ENCODE measurements at regions of chr2 and their contacts with region 1.

Region 1: DNA sequence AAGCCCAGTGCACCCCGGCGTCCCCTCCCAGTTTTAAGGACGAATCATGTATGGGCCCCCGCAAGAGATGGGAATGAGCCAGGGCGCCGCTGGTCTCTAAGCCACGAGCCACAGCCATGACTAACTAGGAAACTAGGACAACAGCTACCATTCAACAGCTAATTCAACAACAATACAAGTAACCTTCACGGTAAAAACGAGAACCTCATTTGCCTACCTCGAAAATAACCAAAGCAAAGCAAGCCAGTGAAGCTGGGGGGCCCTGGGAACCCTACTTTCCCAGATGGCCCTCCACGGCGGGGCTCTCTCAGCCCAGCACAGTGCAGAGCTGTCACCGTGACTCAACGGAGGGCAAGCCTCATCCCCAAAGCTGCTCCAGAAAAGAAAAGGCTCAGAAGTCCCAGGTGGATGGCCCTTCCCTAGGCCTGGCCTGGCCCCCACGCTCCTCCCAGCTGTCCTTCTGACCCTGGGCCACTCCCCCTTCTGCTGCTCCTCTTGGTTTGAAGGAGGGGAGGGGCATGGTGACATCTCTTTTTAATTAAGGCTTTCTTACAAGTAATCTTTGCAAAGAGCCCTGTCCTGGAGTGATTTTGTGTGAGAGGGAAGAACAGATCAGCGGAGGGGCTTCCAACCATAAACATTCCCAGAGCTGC is 126.3 kb downstream of the HDAC4 start:
- DNase-seq: peak in 2 of 5 donors; percentile 49 to 71
- ATAC-seq: peak; percentile 24 to 58 (median 52)
- H3K4me3 ChIP-seq: peak overlapping the region in 8 of 12 donors; percentile 1 to 46 (median 14)
- H3K27ac ChIP-seq: peak overlapping the region in 10 of 12 donors; percentile 24 to 91 (median 78)
- H3K4me1 ChIP-seq: peaks cover 3 to 67% (median 45%) of the 10 kb centered on the region in 12 donors
- H3K27me3 ChIP-seq: no peaks in the 10 kb centered on the region
- CTCF ChIP-seq: no peak
- POLR2A ChIP-seq: no peak

Region 2: DNA sequence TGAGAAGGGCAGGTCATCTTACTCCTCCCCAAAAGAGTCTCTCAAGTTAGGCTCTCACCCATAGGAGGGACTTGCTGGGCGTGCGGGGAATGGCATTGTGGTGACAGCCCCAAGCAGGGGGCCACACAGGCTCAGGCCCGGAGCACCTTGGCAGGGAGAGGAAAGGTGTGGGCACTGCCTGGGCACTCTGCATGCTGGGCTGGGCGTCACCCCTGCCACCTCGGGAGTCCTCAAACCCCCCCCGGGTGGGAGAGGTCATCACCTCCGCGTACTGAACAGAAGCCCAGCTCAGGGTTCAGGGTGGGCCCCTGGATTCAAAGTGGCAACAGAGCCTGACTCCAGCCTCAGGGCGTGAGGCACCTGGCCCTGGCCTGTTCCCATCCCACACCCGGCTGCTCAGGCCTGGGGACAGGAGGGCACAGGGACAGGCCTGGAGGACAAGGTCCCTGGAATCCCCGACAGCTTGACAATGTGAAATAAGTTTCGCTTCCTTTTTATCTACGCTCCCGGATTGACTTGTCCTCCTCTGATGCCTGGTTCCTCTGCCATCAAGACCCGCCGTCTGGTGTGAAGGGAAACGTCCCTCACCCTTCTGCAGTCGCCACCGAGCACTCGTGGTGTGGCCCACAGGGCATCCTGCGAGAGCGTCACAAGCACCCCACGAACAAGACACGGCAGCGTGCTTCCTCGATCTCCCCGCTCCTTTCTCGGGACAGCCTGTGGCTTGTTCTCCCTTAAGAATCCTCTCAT is 28.5 kb after region 1 on chr2:
- intact Hi-C with region 1: loop called in 1 of 10 experiments (anchors 1 kb)
- DNase-seq: peak in 1 of 5 donors; percentile 25
- ATAC-seq: peak in 2 of 4 donors; percentile 4 to 25
- H3K4me3 ChIP-seq: no peak overlapping the region
- H3K27ac ChIP-seq: peak overlapping the region in 9 of 12 donors; percentile 28 to 90 (median 42)
- H3K4me1 ChIP-seq: peaks cover 0 to 85% (median 54%) of the 10 kb centered on the region in 12 donors
- H3K27me3 ChIP-seq: no peaks in the 10 kb centered on the region
- CTCF ChIP-seq: no peak
- POLR2A ChIP-seq: no peak